ENCODE measurements at regions of chr1 and their contacts with region 1.

Region 1: GRCh38 chr1:214123061-214123784 is 135.4 kb downstream of the PROX1 start:
- DNase-seq: peak; percentile 65 to 89
- H3K4me3 ChIP-seq: no peak overlapping the region
- H3K27ac ChIP-seq: no peak overlapping the region
- H3K4me1 ChIP-seq: peaks cover 0 to 4% (median 2%) of the 10 kb centered on the region in 4 donors
- H3K27me3 ChIP-seq: no peaks in the 10 kb centered on the region
- CTCF ChIP-seq: peak in 5 of 7 experiments; percentile 21 to 72 (median 50)
- EP300 ChIP-seq: no peak
- POLR2A ChIP-seq: no peak

Region 2: DNA sequence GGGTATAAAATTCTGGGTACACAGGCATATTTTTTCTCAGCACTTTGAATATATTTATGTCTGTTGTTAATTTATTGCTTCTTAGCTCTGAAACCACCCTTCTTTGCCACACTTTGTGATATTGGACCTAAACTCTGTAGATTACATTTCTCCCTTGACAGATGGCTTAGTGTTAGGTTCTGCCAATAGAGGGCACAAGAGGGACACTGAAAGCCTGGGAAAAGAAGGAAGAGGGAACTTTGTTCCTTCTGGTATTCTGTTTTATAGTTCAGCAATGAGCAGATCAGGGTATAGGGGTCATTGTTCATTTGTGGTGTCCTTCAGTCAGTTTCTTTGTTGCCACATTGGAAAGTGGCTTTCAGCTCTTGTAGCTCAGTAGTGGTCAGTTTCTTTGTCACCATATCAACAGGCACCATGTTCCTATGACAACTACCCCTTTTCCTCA is 559.0 kb before region 1 on chr1:
- intact Hi-C with region 1: loop called (anchors 10 kb)
- DNase-seq: peak in 1 of 2 donors; percentile 25
- H3K4me3 ChIP-seq: no peak overlapping the region
- H3K27ac ChIP-seq: no peak overlapping the region
- H3K4me1 ChIP-seq: no peaks in the 10 kb centered on the region
- H3K27me3 ChIP-seq: no peaks in the 10 kb centered on the region
- CTCF ChIP-seq: peak in 4 of 7 experiments; percentile 24 to 43 (median 32)
- EP300 ChIP-seq: no peak
- POLR2A ChIP-seq: no peak

Region 3: GRCh38 chr1:214213136-214213535 is 89.9 kb after region 1 on chr1:
- intact Hi-C with region 1: no loop called
- DNase-seq: no peak
- H3K4me3 ChIP-seq: no peak overlapping the region
- H3K27ac ChIP-seq: no peak overlapping the region
- H3K4me1 ChIP-seq: peaks cover 6 to 26% (median 16%) of the 10 kb centered on the region in 4 donors
- H3K27me3 ChIP-seq: peaks cover 0 to 10% (median 0%) of the 10 kb centered on the region in 3 donors
- CTCF ChIP-seq: no peak
- EP300 ChIP-seq: no peak
- POLR2A ChIP-seq: no peak

Region 4: DNA sequence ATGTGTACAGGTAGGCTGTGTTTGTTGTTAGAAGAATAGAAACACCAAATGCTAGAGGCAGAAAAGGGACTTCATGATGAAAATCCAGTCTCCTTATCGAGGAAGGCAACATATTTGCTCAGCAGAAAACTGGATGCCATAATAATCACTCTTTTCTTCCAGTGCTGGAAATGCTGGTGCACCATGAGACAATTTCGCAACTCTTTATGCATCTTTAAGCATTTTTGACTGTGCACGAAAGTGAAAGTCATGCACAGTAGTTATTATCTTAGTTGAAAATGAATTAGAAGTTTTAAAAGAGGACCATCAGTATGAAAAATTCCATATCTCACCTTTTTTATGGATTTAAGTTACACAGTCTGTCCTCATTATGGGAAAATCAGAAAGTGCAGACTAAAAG is 186.8 kb after region 1 on chr1:
- intact Hi-C with region 1: no loop called
- DNase-seq: no peak
- H3K4me3 ChIP-seq: no peak overlapping the region
- H3K27ac ChIP-seq: no peak overlapping the region
- H3K4me1 ChIP-seq: no peaks in the 10 kb centered on the region
- H3K27me3 ChIP-seq: no peaks in the 10 kb centered on the region
- CTCF ChIP-seq: no peak
- EP300 ChIP-seq: no peak
- POLR2A ChIP-seq: no peak

Region 5: DNA sequence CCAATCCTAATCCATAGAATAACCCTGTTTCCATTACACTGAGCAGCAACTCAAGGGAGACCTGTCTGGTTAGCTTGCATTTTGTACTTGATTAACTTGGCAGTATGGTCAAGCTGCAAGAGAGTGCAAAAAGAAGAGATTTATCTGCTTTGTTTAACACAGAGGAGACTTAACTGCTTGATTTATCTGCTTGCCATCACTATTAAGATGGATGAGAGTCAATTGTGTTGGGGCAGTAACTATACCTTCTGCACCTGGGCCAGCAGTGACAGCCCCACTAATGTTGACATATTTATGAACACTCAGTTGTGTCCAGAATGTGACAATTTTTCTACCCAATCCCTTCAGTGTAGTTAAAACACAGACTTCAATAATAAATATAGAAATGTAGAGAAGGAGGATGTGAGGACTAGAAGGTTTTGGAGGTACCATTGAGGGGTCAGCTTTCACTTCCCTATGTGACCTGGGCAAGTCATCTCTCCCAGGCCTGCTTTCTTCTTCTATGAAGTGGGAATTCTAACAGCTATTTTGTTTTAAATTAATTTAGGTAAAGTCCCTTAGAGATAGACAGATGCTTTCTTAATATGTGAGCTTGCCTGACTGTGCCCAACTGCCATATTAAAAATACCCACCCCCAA is 800.2 kb after region 1 on chr1:
- intact Hi-C with region 1: no loop called
- DNase-seq: no peak
- H3K4me3 ChIP-seq: no peak overlapping the region
- H3K27ac ChIP-seq: no peak overlapping the region
- H3K4me1 ChIP-seq: peaks cover 0 to 5% (median 2%) of the 10 kb centered on the region in 4 donors
- H3K27me3 ChIP-seq: no peaks in the 10 kb centered on the region
- CTCF ChIP-seq: no peak
- EP300 ChIP-seq: no peak
- POLR2A ChIP-seq: no peak